Psoas muscle (tissue), 8 donors: ENCODE measurements at regions of chr14 and their contacts with region 1.

Region 1: DNA sequence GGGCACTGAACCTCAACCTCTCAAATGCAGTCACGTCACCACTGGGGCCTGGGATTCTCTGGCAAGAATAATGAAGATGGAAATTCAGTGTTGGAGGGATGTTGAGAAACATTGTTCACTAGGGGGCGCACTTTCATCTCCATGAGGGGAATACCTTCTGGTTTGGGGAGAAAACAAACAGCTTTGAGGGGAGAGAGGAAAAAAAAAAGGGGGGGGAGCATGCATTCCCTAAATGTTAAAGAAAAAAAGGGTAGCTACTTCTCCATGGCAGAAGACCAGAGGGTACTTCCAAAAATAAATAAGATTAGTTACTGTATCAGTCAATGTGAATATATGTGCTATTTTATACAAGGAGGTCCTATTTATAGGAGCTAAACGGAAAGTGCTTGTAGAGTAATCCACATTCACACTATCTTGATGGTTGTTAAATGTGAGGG is 5.8 kb upstream of the TBPL2 start:
- DNase-seq: no peak
- ATAC-seq: peak; percentile 44 to 78 (median 56)
- H3K4me3 ChIP-seq: no peak overlapping the region
- H3K27ac ChIP-seq: no peak overlapping the region
- H3K4me1 ChIP-seq: no peaks in the 10 kb centered on the region
- H3K27me3 ChIP-seq: no peaks in the 10 kb centered on the region
- CTCF ChIP-seq: peak; percentile 63

Region 2: DNA sequence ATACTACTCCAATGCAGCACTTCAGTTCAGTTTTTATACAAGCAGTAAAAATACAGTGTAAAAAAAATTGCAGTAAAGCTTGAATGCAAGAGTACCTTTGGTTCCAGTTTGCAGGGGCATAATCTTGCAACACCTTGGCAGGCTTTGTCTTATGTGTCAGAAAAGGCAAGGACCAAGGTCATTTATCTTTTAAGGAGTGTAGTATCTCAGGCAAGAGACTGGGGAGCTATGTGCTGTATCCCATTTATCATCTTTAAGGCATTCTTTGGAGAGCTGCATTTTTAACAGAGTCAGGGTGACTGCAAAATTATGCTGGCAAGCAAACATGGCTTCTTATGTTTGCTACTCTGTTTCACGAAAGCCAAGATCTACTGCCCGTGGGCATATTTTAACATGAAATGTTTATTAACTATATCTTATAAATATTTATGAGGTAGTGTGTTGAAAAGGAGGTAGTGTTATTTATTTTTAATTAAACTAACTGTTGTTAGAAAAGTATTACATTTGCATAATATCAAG is 240.0 kb before region 1 on chr14:
- intact Hi-C with region 1: no loop called
- DNase-seq: no peak
- ATAC-seq: no peak
- H3K4me3 ChIP-seq: no peak overlapping the region
- H3K27ac ChIP-seq: no peak overlapping the region
- H3K4me1 ChIP-seq: no peaks in the 10 kb centered on the region
- H3K27me3 ChIP-seq: no peaks in the 10 kb centered on the region
- CTCF ChIP-seq: no peak

Region 3: GRCh38 chr14:55354500-55354899 is 91.7 kb before region 1 on chr14:
- intact Hi-C with region 1: no loop called
- DNase-seq: peak in 1 of 2 donors; percentile 19
- ATAC-seq: peak; percentile 78 to 86 (median 81)
- H3K4me3 ChIP-seq: no peak overlapping the region
- H3K27ac ChIP-seq: peak overlapping the region; percentile 53
- H3K4me1 ChIP-seq: peaks cover 6% of the 10 kb centered on the region
- H3K27me3 ChIP-seq: no peaks in the 10 kb centered on the region
- CTCF ChIP-seq: peak; percentile 62

Region 4: DNA sequence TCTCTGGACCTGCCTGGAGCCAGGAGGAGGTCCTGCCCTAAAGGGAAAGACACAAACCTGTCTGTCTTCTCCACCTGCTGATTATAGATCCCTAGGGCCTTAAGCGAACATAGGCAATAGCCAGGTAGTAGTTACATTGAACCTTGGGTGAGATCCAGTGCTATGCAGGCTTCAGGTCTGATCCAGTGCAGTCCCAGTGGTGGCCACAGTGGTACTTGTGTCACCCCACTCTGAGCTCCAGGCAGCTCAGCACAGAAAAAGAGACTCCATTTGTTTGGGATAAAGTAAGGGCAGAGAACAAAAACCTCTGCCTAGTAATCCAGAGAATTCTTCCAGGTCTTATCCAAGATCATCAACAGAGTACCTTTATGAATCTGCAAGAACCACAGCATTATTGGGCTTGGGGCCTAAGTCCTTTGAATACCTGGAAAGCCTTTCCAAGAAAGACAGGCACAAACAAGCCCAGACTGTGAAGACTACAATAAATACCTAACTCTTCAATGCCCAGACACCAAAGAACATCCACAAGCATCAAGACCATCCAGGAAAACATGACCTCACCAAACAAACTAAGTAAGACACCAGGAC is 73.3 kb after region 1 on chr14:
- intact Hi-C with region 1: no loop called
- DNase-seq: no peak
- ATAC-seq: no peak
- H3K4me3 ChIP-seq: no peak overlapping the region
- H3K27ac ChIP-seq: no peak overlapping the region
- H3K4me1 ChIP-seq: peaks cover 3% of the 10 kb centered on the region
- H3K27me3 ChIP-seq: no peaks in the 10 kb centered on the region
- CTCF ChIP-seq: no peak

Region 5: DNA sequence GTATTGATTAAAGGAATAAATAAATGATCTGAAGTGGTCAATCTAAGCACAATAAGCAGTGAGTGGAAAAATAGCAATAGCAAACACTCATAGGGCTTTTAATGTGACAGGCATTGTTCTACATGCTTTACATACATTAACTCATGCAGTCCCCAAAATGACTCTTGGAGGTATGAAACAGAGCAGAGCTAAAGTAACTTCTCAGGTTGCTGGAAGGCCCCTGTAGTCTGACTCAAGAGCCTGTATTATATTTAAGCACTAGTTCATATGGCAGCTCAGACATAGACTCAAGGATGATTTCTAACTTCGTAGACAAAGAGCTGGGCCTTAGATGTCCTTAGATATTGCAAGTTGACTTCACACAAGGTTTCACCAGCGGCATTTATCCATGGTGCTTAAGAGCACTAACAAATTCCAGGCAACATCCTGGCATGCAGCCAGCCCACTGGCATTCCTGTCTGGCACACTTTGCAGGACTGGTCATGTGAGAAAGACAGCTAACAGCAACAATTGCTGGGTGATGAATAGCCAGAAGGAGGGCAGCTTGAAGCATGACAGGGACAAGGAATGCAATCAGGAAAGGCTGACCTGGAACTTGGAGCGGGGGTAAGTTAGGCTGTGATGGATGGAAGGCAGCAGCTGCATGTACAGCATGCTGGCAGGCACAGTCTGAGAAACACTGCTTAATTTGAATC is 110.8 kb after region 1 on chr14:
- intact Hi-C with region 1: loop called in 1 of 2 experiments (anchors 10 kb)
- DNase-seq: peak; percentile 82 to 93
- ATAC-seq: peak; percentile 98 to 99 (median 99)
- H3K4me3 ChIP-seq: peak overlapping the region; percentile 30
- H3K27ac ChIP-seq: peak overlapping the region; percentile 71
- H3K4me1 ChIP-seq: no peaks in the 10 kb centered on the region
- H3K27me3 ChIP-seq: no peaks in the 10 kb centered on the region
- CTCF ChIP-seq: no peak